ENCODE measurements at regions of chr1 and their contacts with region 1.

Region 1: DNA sequence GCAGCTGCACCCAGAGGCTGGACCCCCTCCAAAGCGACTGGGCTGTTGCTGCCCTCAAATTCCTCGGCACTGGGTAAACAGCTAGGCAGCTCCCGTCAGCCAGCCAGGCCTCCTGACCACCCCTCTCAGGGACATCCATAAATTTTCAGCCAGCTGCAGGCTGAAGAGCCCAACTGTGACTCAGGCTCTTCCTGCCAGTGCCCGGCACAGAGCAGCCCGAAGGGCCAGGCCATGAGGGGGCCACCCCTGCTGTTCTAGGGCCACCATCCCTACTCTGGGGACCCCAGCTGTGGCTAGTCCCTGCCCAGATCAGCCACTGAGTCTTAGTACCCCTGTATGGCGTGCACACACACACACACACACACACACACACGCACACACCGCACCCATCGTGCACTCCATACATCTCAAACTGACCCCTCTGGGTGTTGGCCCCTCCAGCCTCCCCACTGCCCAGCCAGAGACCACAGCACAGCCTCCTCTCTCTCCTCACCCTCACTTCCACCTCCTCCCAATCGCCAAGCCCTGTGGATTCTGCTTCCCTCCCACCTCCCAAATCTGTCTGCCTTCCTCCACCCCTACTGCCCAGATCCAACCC is 6.2 kb upstream of the LAPTM5 start:
- DNase-seq: peak; percentile 48
- ATAC-seq: peak; percentile 85
- H3K4me3 ChIP-seq: no peak overlapping the region
- H3K27ac ChIP-seq: no peak overlapping the region
- H3K4me1 ChIP-seq: peaks cover 9% of the 10 kb centered on the region; the same call in 1 of the 2 replicates
- H3K27me3 ChIP-seq: no peaks in the 10 kb centered on the region; the same call in 1 of the 2 replicates
- CTCF ChIP-seq: no peak
- POLR2A ChIP-seq: no peak
- RAD21 ChIP-seq: no peak

Region 2: GRCh38 chr1:32094746-32095521 is 1331.2 kb after region 1 on chr1:
- CTCF ChIA-PET with region 1: no interaction called
- POLR2A ChIA-PET with region 1: interaction called, 17 read pairs
- dilution Hi-C with region 1: no loop called
- in situ Hi-C with region 1: no loop called
- intact Hi-C with region 1: no loop called
- DNase-seq: no peak
- ATAC-seq: no peak
- H3K4me3 ChIP-seq: no peak overlapping the region
- H3K27ac ChIP-seq: no peak overlapping the region
- H3K4me1 ChIP-seq: no peaks in the 10 kb centered on the region
- H3K27me3 ChIP-seq: no peaks in the 10 kb centered on the region
- CTCF ChIP-seq: no peak
- POLR2A ChIP-seq: no peak
- RAD21 ChIP-seq: no peak

Region 3: DNA sequence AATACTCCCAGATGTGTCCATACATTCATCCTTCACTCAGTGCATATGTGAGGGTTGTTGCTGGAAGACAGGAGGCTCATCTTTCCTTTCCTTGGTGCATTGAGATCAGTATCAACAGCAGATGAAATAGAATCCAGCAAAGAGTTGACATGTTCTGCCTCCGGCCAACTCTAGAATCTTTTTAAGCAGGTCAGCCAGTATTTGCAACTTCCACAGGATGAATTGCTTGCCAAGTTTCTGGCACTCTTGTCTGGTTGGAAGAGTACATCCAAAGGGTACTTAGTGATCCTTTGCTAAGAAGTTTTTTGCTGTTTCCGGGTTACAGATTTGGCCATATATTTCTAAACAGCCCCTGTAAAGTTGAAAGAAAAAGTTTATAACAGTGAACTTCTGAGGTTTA is 1917.8 kb after region 1 on chr1:
- CTCF ChIA-PET with region 1: no interaction called
- POLR2A ChIA-PET with region 1: no interaction called
- dilution Hi-C with region 1: no loop called
- in situ Hi-C with region 1: no loop called
- intact Hi-C with region 1: no loop called
- DNase-seq: peak; percentile 28
- ATAC-seq: no peak
- H3K4me3 ChIP-seq: no peak overlapping the region
- H3K27ac ChIP-seq: no peak overlapping the region
- H3K4me1 ChIP-seq: peaks cover 9% of the 10 kb centered on the region
- H3K27me3 ChIP-seq: no peaks in the 10 kb centered on the region
- CTCF ChIP-seq: no peak
- POLR2A ChIP-seq: no peak
- RAD21 ChIP-seq: no peak

Measured in IMR-90 (cell line).